ENCODE measurements at regions of chr4 and their contacts with region 1.

Region 1: GRCh38 chr4:61555789-61556188 is 355.7 kb downstream of the ADGRL3 start:
- DNase-seq: peak; percentile 39 to 80
- H3K4me3 ChIP-seq: no peak overlapping the region
- H3K27ac ChIP-seq: peak overlapping the region; percentile 29; the same call in 1 of the 2 replicates
- H3K4me1 ChIP-seq: peaks cover 9% of the 10 kb centered on the region; the same call in 1 of the 2 replicates
- H3K27me3 ChIP-seq: no peaks in the 10 kb centered on the region
- CTCF ChIP-seq: no peak

Region 2: DNA sequence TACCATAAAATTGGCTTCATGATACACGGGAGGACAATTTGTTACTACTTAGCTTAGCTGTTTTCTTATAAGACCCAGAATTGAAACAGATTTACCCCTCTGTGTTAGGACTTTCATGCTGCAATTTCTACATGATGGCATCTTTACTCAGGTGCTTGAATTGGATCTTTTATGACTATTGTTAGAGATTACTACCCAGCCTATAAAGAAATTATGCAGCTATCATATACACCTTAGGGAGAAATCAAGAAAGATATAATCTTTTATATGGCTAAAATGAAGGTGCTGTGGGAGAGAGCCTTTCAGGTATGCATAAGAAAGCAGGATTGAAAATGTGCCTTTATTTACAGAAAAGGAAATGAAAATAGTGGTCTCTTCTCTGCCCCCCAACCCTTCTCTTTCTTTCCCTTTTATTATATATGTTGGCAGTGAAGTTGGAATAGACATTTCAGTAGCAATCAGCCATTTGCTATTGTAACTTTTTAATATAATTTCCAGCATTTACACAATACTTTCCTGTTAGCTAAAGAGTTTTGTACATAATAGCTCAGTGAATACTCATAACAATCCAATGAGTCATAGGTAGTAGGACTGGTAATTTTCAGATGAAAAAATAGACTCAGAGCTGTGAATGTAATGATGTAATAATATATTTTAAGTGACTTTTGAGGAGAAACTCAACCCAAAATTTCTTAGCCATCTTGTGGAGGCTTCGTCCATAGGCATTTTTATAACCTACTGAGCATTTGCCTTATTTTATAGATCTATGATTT is 43.9 kb before region 1 on chr4:
- CTCF ChIA-PET with region 1: no interaction called
- POLR2A ChIA-PET with region 1: interaction called, 12 read pairs
- intact Hi-C with region 1: no loop called
- DNase-seq: peak in 1 of 2 experiments; percentile 65
- H3K4me3 ChIP-seq: no peak overlapping the region
- H3K27ac ChIP-seq: no peak overlapping the region
- H3K4me1 ChIP-seq: peaks cover 8% of the 10 kb centered on the region
- H3K27me3 ChIP-seq: no peaks in the 10 kb centered on the region
- CTCF ChIP-seq: no peak

Region 3: GRCh38 chr4:61520681-61521160 is 35.1 kb before region 1 on chr4:
- CTCF ChIA-PET with region 1: no interaction called
- POLR2A ChIA-PET with region 1: no interaction called
- intact Hi-C with region 1: loop called (anchors 5 kb)
- DNase-seq: peak; percentile 44 to 76
- H3K4me3 ChIP-seq: no peak overlapping the region
- H3K27ac ChIP-seq: no peak overlapping the region
- H3K4me1 ChIP-seq: no peaks in the 10 kb centered on the region
- H3K27me3 ChIP-seq: no peaks in the 10 kb centered on the region
- CTCF ChIP-seq: no peak

Region 4: DNA sequence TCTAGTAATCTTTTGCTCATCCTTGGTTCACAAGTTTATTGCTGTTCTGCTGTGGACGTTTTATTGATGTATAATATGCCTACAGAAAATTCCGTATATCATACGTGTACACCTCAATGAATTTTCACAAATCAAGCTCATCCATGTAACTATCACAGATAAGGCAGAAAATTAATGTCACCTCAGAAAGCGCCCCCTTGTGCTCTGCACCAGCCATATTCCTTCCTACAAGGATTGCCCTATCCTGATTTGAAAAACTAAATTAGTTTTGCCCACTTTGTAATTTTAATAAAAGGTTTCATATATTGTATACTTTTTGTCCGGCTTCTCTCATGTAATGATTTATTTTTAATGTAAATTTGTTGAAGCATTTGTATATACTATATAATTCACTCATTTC is 35.1 kb after region 1 on chr4:
- CTCF ChIA-PET with region 1: no interaction called
- POLR2A ChIA-PET with region 1: interaction called, 11 read pairs
- intact Hi-C with region 1: no loop called
- DNase-seq: no peak
- H3K4me3 ChIP-seq: no peak overlapping the region
- H3K27ac ChIP-seq: no peak overlapping the region
- H3K4me1 ChIP-seq: no peaks in the 10 kb centered on the region
- H3K27me3 ChIP-seq: no peaks in the 10 kb centered on the region
- CTCF ChIP-seq: 0 out of 2 replicates have a peak, but pooled peaks have one; percentile 24

Measured in PC-9 (cell line).